Posterior cingulate gyrus (tissue), 11 donors: ENCODE measurements at regions of chr4 and their contacts with region 1.

Region 1: DNA sequence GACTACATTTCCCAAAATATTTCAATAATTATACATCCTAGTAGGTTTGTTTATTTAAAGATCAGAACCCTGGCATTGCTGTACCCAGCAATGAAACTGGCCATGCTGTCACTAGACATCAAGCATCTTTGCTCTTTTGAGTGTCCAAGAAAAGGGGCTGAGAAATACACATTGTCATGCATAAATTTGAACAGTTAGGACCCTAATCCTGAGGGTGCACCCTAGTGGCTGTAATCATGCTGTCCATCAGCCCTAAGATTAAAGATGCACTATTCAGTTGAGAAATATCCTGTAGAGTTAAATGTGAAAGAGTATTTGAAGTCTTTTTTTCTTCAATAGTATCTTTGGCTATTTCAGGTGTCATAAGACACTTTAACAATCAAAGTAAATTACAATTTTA is 108.8 kb downstream of the NFKB1 start:
- DNase-seq: no peak

Region 2: DNA sequence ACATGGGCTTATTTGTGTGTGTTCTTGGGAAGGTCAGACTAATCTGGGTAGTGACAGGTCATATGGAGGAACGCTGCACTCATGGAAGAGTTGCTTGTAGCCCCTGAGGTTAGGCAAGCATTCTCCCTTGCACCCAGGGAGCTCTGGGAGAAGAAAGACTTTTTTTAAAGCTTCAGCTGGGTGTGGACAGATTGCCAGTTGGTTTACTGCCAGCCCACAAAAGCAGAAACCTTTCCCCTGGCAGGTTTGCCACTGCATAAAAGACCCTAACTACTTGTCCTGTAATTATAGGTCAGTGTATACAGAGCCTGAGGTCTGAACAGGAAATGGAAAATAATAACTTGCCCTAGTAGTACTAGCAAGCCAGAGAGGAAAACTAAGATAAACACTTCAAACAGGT is 116.2 kb before region 1 on chr4:
- intact Hi-C with region 1: loop called (anchors 10 kb)
- DNase-seq: no peak